ENCODE measurements at regions of chr12 and their contacts with region 1.

Region 1: GRCh38 chr12:110543252-110543959 is 39.7 kb downstream of the PPTC7 start:
- DNase-seq: peak; percentile 100
- H3K4me3 Mint-ChIP-seq: peak overlapping the region; percentile 60
- H3K27ac Mint-ChIP-seq: peak overlapping the region; percentile 90
- H3K4me1 Mint-ChIP-seq: peaks cover 54% of the 10 kb centered on the region
- H3K27me3 Mint-ChIP-seq: no peaks in the 10 kb centered on the region
- CTCF ChIP-seq: no peak

Region 2: DNA sequence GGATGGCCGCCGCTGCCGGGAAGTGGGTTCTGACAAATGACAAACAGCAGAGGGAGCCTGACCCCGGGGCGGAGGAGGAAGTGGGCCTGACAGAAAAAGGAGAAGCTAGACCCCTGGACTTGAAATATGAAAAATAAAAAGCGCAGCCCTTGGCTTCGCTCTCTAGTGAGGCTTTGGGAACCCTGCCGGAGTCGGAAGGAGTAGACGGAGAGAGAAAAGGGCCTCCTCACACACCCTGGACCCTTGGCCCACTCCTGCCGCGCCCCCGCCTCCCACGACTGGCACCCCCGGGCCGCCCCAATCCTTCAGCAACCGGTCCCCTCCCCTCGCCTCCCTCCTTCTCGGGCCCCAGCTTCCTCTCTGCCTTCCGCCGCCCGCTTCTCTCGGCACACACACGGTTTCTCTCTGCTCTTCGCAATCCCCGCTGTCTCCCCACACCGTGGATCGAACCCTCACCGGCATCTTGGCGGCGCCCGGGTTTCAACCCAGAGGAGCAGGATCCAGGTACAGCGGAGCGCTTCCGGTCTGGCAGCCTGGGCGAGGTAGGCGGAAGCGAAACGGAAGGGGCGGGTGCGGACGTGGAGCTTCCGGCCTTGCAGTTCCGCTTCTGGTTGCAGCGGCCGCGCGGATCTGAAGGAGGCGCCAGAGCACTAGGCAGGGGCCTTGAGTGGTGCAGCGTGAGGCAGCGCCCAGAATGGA is 93.5 kb before region 1 on chr12 and contains the start of gene ARPC3:
- CTCF ChIA-PET with region 1: no interaction called
- POLR2A ChIA-PET with region 1: interaction called, 13 read pairs
- intact Hi-C with region 1: no loop called
- DNase-seq: peak; percentile 93
- H3K4me3 Mint-ChIP-seq: peak within 1 kb of the TSS; percentile 99
- H3K27ac Mint-ChIP-seq: peak within 1 kb of the TSS; percentile 100
- H3K4me1 Mint-ChIP-seq: peaks cover 5% of the 10 kb centered on the region
- H3K27me3 Mint-ChIP-seq: no peaks in the 10 kb centered on the region
- CTCF ChIP-seq: peak; percentile 83
- total RNA-seq, gene ARPC3: 230 and 245 TPM in 2 replicates

Region 3: GRCh38 chr12:110513842-110514241 is 29.6 kb before region 1 on chr12:
- CTCF ChIA-PET with region 1: interaction called, 6 read pairs
- POLR2A ChIA-PET with region 1: interaction called, 11 read pairs
- intact Hi-C with region 1: loop called (anchors 2 kb)
- DNase-seq: no peak
- H3K4me3 Mint-ChIP-seq: no peak overlapping the region
- H3K27ac Mint-ChIP-seq: peak overlapping the region; percentile 4
- H3K4me1 Mint-ChIP-seq: no peaks in the 10 kb centered on the region
- H3K27me3 Mint-ChIP-seq: no peaks in the 10 kb centered on the region
- CTCF ChIP-seq: no peak

Region 4: DNA sequence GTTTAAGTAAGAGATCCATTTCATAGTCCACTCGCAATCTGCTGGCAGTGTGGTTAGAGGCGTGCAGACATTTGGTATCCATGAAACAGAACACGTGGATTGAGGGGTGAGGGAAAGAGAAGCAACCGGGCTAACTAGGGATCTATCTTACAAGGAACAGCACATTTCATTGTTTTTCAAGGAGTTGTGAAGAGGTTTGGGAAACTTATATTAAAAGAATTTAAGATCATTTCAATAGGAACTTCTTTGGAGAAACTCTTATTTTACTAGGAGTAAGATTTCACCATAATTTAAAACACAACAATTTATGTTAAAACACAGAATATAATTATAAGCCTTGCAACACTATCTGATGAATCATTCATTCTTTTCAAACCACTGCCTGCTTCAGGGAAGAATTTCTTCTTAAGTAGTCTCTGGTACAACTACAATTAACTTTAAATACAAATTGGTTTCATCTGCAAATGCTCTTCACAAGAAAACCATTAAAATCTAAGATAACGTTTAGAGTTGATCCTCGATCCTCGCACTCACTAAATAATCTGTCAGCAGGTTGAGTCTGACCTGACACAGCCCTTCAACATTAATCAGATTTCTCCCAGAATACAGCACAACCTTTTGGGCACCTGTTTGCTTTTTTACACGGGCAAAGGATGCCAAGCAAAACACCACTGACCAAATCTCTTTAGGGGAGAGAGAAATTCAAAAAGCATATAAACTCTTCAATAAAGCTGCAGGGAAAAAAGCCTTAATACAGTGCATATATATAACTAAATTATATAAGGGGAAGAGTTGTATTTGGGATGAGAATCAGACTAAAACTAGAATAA is 12.4 kb after region 1 on chr12:
- CTCF ChIA-PET with region 1: interaction called, 3 read pairs
- POLR2A ChIA-PET with region 1: interaction called, 351 read pairs
- intact Hi-C with region 1: no loop called
- DNase-seq: peak; percentile 78
- H3K4me3 Mint-ChIP-seq: peak overlapping the region; percentile 49
- H3K27ac Mint-ChIP-seq: peak overlapping the region; percentile 97
- H3K4me1 Mint-ChIP-seq: peaks cover 55% of the 10 kb centered on the region
- H3K27me3 Mint-ChIP-seq: no peaks in the 10 kb centered on the region
- CTCF ChIP-seq: no peak

Region 5: GRCh38 chr12:110583137-110584059 is 40.0 kb after region 1 on chr12 and contains the start of gene PPTC7:
- CTCF ChIA-PET with region 1: interaction called, 9 read pairs
- POLR2A ChIA-PET with region 1: interaction called, 336 read pairs
- intact Hi-C with region 1: loop called (anchors 5 kb)
- DNase-seq: peak; percentile 97
- H3K4me3 Mint-ChIP-seq: peak within 1 kb of the TSS; percentile 96
- H3K27ac Mint-ChIP-seq: peak within 1 kb of the TSS; percentile 81
- H3K4me1 Mint-ChIP-seq: peaks cover 10% of the 10 kb centered on the region
- H3K27me3 Mint-ChIP-seq: no peaks in the 10 kb centered on the region
- CTCF ChIP-seq: no peak
- total RNA-seq, gene PPTC7: 32.0 and 36.5 TPM in 2 replicates